ENCODE measurements at regions of chr7 and their contacts with region 1.

Region 1: DNA sequence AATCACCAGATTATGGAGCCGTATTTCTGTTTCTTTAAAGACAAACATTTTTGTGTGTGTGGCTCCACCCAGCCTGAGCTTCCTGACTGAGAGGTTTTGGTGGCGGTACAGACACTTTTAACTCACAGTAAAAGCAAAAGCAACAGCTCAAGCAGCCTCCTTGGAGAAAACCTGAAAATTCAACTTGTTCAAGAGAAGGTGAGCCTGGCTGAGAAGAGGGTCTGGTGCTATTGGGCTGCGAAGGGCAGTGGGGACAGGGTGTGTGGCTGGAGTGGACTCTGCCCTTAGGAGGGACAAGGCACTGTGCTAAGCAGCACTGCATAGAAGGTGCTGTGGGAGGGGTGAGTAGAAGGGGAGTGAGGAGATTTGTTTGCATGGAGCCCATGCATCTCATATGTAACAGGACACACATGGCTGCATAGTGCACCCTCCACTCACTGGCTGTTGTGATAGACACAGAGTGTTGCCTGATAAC is at the start of gene GIMAP7:
- DNase-seq: peak; percentile 36 to 87 (median 73)
- ATAC-seq: peak; percentile 82
- H3K4me3 ChIP-seq: peak within 1 kb of the TSS; percentile 63 to 76
- H3K4me3 Mint-ChIP-seq: peak within 1 kb of the TSS; percentile 100
- H3K27ac ChIP-seq: peak within 1 kb of the TSS; percentile 69 to 75
- H3K27ac Mint-ChIP-seq: peak within 1 kb of the TSS; percentile 99
- H3K4me1 ChIP-seq: peaks cover 45% of the 10 kb centered on the region
- H3K4me1 Mint-ChIP-seq: peaks cover 48% of the 10 kb centered on the region
- H3K27me3 ChIP-seq: no peaks in the 10 kb centered on the region
- H3K27me3 Mint-ChIP-seq: no peaks in the 10 kb centered on the region
- CTCF ChIP-seq: no peak
- total RNA-seq, gene GIMAP7: 21.2 to 29.7 TPM

Region 2: DNA sequence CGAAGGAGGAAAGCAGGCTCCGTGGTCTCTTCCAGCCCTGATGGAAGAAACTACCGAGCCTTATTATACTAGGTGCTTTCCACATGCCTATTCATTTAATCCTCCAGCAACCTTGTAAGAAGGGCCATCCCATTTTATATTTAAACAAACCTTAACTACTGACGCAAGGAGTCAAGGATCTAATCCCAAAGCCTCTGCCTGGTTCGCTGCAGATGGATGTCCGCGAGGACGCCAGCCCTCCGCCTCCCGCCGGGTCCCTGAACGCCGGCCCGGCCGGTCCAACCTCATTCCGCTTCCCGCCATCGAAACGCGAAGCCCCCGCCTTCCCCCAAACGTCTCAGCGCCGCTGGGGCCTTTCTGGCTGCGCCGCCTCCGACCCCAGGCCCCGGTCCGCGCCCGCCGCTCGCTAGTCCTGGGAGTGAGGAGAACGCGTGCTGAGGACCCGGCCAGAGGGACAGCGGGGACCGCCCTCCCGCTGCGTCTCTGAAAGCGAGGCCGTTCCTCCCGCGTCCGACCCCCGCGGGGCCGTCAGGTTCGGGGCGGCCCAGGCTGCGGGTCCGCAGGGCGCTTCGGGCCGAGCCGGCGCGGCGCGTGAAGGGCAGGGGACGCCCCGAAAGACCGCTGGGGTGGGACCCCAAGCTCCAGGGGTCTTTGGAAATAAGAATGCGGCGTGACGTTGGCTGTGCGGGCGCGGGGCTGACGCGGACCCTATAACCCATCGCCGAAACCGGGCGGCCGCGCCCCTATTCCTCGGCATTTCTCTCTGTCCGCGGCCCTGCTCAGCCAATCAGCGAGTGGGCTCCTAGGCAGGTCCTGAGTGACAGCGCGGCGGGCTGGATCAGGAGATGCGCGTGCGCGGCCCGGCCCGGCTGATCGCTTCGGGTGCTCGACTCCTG is 641.5 kb before region 1 on chr7 and contains the start of gene ATP6V0E2:
- CTCF ChIA-PET with region 1: no interaction called
- POLR2A ChIA-PET with region 1: no interaction called
- intact Hi-C with region 1: no loop called
- DNase-seq: peak; percentile 72 to 95 (median 90)
- ATAC-seq: peak; percentile 73
- H3K4me3 ChIP-seq: peak within 1 kb of the TSS; percentile 70 to 80
- H3K4me3 Mint-ChIP-seq: peak within 1 kb of the TSS; percentile 92
- H3K27ac ChIP-seq: peak within 1 kb of the TSS; percentile 63 to 66
- H3K27ac Mint-ChIP-seq: peak within 1 kb of the TSS; percentile 90
- H3K4me1 ChIP-seq: peaks cover 68% of the 10 kb centered on the region
- H3K4me1 Mint-ChIP-seq: peaks cover 84% of the 10 kb centered on the region
- H3K27me3 ChIP-seq: no peaks in the 10 kb centered on the region
- H3K27me3 Mint-ChIP-seq: no peaks in the 10 kb centered on the region
- CTCF ChIP-seq: no peak
- total RNA-seq, gene ATP6V0E2: 32.9 to 33.5 TPM

Region 3: GRCh38 chr7:150466477-150466876 is 48.3 kb before region 1 on chr7:
- CTCF ChIA-PET with region 1: interaction called, 4 read pairs
- POLR2A ChIA-PET with region 1: interaction called, 17 read pairs
- intact Hi-C with region 1: no loop called
- DNase-seq: no peak
- ATAC-seq: no peak
- H3K4me3 ChIP-seq: no peak overlapping the region
- H3K4me3 Mint-ChIP-seq: peak overlapping the region; percentile 23
- H3K27ac ChIP-seq: peak overlapping the region in 1 of 2 experiments; percentile 17
- H3K27ac Mint-ChIP-seq: peak overlapping the region; percentile 53
- H3K4me1 ChIP-seq: peaks cover 73% of the 10 kb centered on the region
- H3K4me1 Mint-ChIP-seq: peaks cover 82% of the 10 kb centered on the region
- H3K27me3 ChIP-seq: no peaks in the 10 kb centered on the region
- H3K27me3 Mint-ChIP-seq: no peaks in the 10 kb centered on the region
- CTCF ChIP-seq: no peak

Region 4: GRCh38 chr7:150481186-150481920 is 33.4 kb before region 1 on chr7:
- CTCF ChIA-PET with region 1: interaction called, 11 read pairs
- POLR2A ChIA-PET with region 1: interaction called, 193 read pairs
- intact Hi-C with region 1: loop called (anchors 1 to 2 kb)
- DNase-seq: peak; percentile 27 to 84 (median 65)
- ATAC-seq: peak; percentile 63
- H3K4me3 ChIP-seq: peak overlapping the region; percentile 1 to 14
- H3K4me3 Mint-ChIP-seq: peak overlapping the region; percentile 81
- H3K27ac ChIP-seq: peak overlapping the region; percentile 55 to 91
- H3K27ac Mint-ChIP-seq: peak overlapping the region; percentile 100
- H3K4me1 ChIP-seq: peaks cover 89% of the 10 kb centered on the region
- H3K4me1 Mint-ChIP-seq: peaks cover 91% of the 10 kb centered on the region
- H3K27me3 ChIP-seq: no peaks in the 10 kb centered on the region
- H3K27me3 Mint-ChIP-seq: no peaks in the 10 kb centered on the region
- CTCF ChIP-seq: no peak

Region 5: GRCh38 chr7:150631866-150632864 is 117.4 kb after region 1 on chr7 and contains the start of gene GIMAP6:
- CTCF ChIA-PET with region 1: interaction called, 5 read pairs
- POLR2A ChIA-PET with region 1: interaction called, 34 read pairs
- intact Hi-C with region 1: loop called in 1 of 2 experiments (anchors 1 kb)
- DNase-seq: peak in 8 of 9 experiments; percentile 33 to 79 (median 50)
- ATAC-seq: peak; percentile 61
- H3K4me3 ChIP-seq: peak within 1 kb of the TSS; percentile 82 to 85
- H3K4me3 Mint-ChIP-seq: peak within 1 kb of the TSS; percentile 97
- H3K27ac ChIP-seq: peak within 1 kb of the TSS; percentile 58 to 83
- H3K27ac Mint-ChIP-seq: peak within 1 kb of the TSS; percentile 96
- H3K4me1 ChIP-seq: peaks cover 54% of the 10 kb centered on the region
- H3K4me1 Mint-ChIP-seq: peaks cover 86% of the 10 kb centered on the region
- H3K27me3 ChIP-seq: no peaks in the 10 kb centered on the region
- H3K27me3 Mint-ChIP-seq: no peaks in the 10 kb centered on the region
- CTCF ChIP-seq: no peak
- total RNA-seq, gene GIMAP6: 10.5 to 10.8 TPM

Region 6: GRCh38 chr7:150685219-150686029 is 170.6 kb after region 1 on chr7 and contains the start of gene GIMAP2:
- CTCF ChIA-PET with region 1: interaction called, 4 read pairs
- POLR2A ChIA-PET with region 1: interaction called, 19 read pairs
- intact Hi-C with region 1: no loop called
- DNase-seq: peak in 3 of 9 experiments; percentile 26 to 81 (median 68)
- ATAC-seq: peak; percentile 77
- H3K4me3 ChIP-seq: peak within 1 kb of the TSS; percentile 62 to 69
- H3K4me3 Mint-ChIP-seq: peak within 1 kb of the TSS; percentile 96
- H3K27ac ChIP-seq: peak within 1 kb of the TSS; percentile 66 to 81
- H3K27ac Mint-ChIP-seq: peak within 1 kb of the TSS; percentile 99
- H3K4me1 ChIP-seq: peaks cover 54% of the 10 kb centered on the region
- H3K4me1 Mint-ChIP-seq: peaks cover 82% of the 10 kb centered on the region
- H3K27me3 ChIP-seq: no peaks in the 10 kb centered on the region
- H3K27me3 Mint-ChIP-seq: no peaks in the 10 kb centered on the region
- CTCF ChIP-seq: no peak
- total RNA-seq, gene GIMAP2: 58.4 to 58.8 TPM

Region 7: DNA sequence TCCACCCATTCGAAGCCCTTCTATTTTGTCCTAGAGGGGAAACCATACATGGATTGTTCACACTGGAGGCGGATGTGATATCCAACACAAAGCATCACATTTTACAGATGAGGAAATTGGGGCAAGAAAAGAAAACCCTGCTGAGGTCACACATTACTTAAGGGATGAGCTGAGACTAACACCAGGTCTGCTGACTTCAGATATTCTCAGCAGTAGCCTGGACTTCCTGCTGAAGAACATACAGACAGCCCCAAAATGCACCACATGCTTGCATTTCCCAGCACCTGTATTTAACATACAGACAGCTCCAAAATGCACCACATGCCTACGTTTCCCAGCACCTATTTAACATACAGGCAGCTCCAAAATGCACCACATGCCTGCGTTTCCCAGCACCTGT is 233.6 kb after region 1 on chr7:
- CTCF ChIA-PET with region 1: interaction called, 4 read pairs
- POLR2A ChIA-PET with region 1: interaction called, 30 read pairs
- intact Hi-C with region 1: no loop called
- DNase-seq: peak in 2 of 9 experiments; percentile 44 to 68
- ATAC-seq: peak; percentile 52
- H3K4me3 ChIP-seq: no peak overlapping the region
- H3K4me3 Mint-ChIP-seq: peak overlapping the region; percentile 20
- H3K27ac ChIP-seq: peak overlapping the region; percentile 11 to 65
- H3K27ac Mint-ChIP-seq: peak overlapping the region; percentile 97
- H3K4me1 ChIP-seq: peaks cover 94% of the 10 kb centered on the region
- H3K4me1 Mint-ChIP-seq: peaks cover 91% of the 10 kb centered on the region
- H3K27me3 ChIP-seq: no peaks in the 10 kb centered on the region
- H3K27me3 Mint-ChIP-seq: no peaks in the 10 kb centered on the region
- CTCF ChIP-seq: no peak

Measured in CD8-positive, alpha-beta T cell (primary cell).